ENCODE measurements at regions of chr16 and their contacts with region 1.

Region 1: GRCh38 chr16:80824718-80825364 is 20.4 kb upstream of the CDYL2 start:
- DNase-seq: peak in 6 of 9 donors; percentile 16 to 51 (median 37)
- ATAC-seq: peak; percentile 69
- H3K4me3 ChIP-seq: no peak overlapping the region
- H3K4me3 Mint-ChIP-seq: no peak overlapping the region
- H3K27ac ChIP-seq: no peak overlapping the region
- H3K27ac Mint-ChIP-seq: no peak overlapping the region
- H3K4me1 ChIP-seq: no peaks in the 10 kb centered on the region
- H3K4me1 Mint-ChIP-seq: peaks cover 0 to 3% (median 0%) of the 10 kb centered on the region in 7 donors
- H3K27me3 ChIP-seq: no peaks in the 10 kb centered on the region
- H3K27me3 Mint-ChIP-seq: peaks cover 2 to 33% (median 5%) of the 10 kb centered on the region in 5 donors

Region 2: GRCh38 chr16:80273635-80274538 is 551.0 kb before region 1 on chr16:
- CTCF ChIA-PET with region 1: no interaction called
- POLR2A ChIA-PET with region 1: no interaction called
- intact Hi-C with region 1: loop called in 1 of 2 experiments (anchors 10 kb)
- DNase-seq: no peak
- ATAC-seq: no peak
- H3K4me3 ChIP-seq: no peak overlapping the region
- H3K4me3 Mint-ChIP-seq: no peak overlapping the region
- H3K27ac ChIP-seq: no peak overlapping the region
- H3K27ac Mint-ChIP-seq: no peak overlapping the region
- H3K4me1 ChIP-seq: no peaks in the 10 kb centered on the region
- H3K4me1 Mint-ChIP-seq: peaks cover 0 to under 1% (median 0%) of the 10 kb centered on the region in 7 donors
- H3K27me3 ChIP-seq: no peaks in the 10 kb centered on the region
- H3K27me3 Mint-ChIP-seq: peaks cover 0 to 25% (median 5%) of the 10 kb centered on the region in 5 donors

Region 3: GRCh38 chr16:80526425-80527061 is 298.3 kb before region 1 on chr16:
- CTCF ChIA-PET with region 1: interaction called, 9 read pairs
- POLR2A ChIA-PET with region 1: no interaction called
- intact Hi-C with region 1: loop called (anchors 1 kb)
- DNase-seq: peak; percentile 18 to 62 (median 51)
- ATAC-seq: peak; percentile 89
- H3K4me3 ChIP-seq: no peak overlapping the region
- H3K4me3 Mint-ChIP-seq: no peak overlapping the region
- H3K27ac ChIP-seq: no peak overlapping the region
- H3K27ac Mint-ChIP-seq: peak overlapping the region in 1 of 9 donors; percentile 4
- H3K4me1 ChIP-seq: no peaks in the 10 kb centered on the region
- H3K4me1 Mint-ChIP-seq: peaks cover 0 to 20% (median 0%) of the 10 kb centered on the region in 7 donors
- H3K27me3 ChIP-seq: no peaks in the 10 kb centered on the region
- H3K27me3 Mint-ChIP-seq: peaks cover 0 to 26% (median 0%) of the 10 kb centered on the region in 5 donors

Region 4: DNA sequence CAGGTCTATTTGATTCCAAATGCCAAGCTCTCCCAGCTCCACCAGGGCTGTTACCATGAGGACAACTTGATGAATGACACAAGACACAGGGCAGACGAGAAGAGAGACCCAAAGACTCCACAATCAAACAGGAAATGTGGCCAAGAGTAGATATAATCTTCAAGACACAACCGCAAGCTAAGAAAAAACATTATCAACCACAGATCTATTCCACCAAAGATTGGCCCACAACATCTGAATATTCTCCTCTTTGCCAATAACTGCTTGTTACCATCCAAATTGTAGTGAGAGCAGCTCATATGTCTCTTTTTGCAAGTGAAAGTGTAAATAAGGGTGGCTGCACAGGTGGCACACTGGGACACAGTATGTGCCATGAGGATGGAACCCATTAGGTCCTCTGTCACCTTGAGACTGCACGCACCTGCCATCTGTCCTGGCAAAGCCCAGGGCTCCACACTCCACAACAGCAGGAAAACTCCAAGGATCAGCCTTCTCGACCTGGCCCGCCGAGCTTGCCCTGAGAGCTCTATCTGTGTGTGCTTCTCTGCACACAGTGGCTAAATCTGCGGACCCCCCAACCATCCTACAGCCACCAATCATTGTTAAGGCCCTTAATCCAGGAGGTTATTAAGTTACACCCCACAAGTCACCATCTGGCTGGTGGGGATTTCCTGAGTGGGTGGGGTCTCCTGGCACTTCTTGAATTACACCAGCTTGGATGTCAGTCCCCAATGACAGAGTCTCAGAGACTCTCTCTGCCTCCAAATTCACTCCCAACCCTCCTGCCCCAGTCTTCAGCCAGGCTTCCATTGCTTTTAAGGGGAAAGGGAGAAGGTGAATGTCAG is 233.5 kb before region 1 on chr16:
- CTCF ChIA-PET with region 1: no interaction called
- POLR2A ChIA-PET with region 1: no interaction called
- intact Hi-C with region 1: loop called in 1 of 2 experiments (anchors 5 kb)
- DNase-seq: peak in 8 of 9 donors; percentile 35 to 83 (median 68)
- ATAC-seq: peak; percentile 92
- H3K4me3 ChIP-seq: peak overlapping the region; percentile 42
- H3K4me3 Mint-ChIP-seq: peak overlapping the region; percentile 45 to 79 (median 64)
- H3K27ac ChIP-seq: no peak overlapping the region
- H3K27ac Mint-ChIP-seq: peak overlapping the region in 8 of 9 donors; percentile 1 to 82 (median 38)
- H3K4me1 ChIP-seq: peaks cover 10 to 19% of the 10 kb centered on the region in 2 donors
- H3K4me1 Mint-ChIP-seq: peaks cover 17 to 50% (median 29%) of the 10 kb centered on the region in 7 donors
- H3K27me3 ChIP-seq: no peaks in the 10 kb centered on the region
- H3K27me3 Mint-ChIP-seq: peaks cover 0 to 35% (median 5%) of the 10 kb centered on the region in 5 donors

Region 5: DNA sequence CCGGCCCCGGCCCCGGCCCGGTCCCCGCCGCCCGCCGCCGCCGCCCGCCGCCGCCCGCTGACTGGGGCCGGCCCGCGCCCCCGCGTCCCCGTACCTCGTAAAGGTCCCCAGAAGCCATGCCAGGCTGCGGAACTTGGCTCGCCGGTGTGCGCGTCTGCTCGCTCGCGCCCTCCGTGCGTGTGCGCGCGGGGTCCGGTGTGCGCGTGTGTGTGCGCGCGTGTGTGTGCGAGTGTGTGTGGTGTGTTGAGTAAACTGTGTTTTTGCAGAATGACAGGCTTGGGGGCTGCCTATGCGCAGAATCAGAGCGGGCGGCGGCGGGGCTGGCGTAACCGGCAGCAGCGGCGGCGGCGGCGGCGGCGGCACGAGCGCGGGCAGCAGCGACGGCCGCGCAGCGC is 20.8 kb before region 1 on chr16:
- CTCF ChIA-PET with region 1: no interaction called
- POLR2A ChIA-PET with region 1: no interaction called
- intact Hi-C with region 1: loop called in 1 of 2 experiments (anchors 2 kb)
- DNase-seq: peak; percentile 26 to 69 (median 52)
- ATAC-seq: peak; percentile 69
- H3K4me3 ChIP-seq: no peak overlapping the region
- H3K4me3 Mint-ChIP-seq: peak overlapping the region; percentile 85 to 96 (median 94)
- H3K27ac ChIP-seq: no peak overlapping the region
- H3K27ac Mint-ChIP-seq: peak overlapping the region in 7 of 9 donors; percentile 46 to 98 (median 78)
- H3K4me1 ChIP-seq: peaks cover 0 to 10% of the 10 kb centered on the region in 2 donors
- H3K4me1 Mint-ChIP-seq: peaks cover 12 to 59% (median 18%) of the 10 kb centered on the region in 7 donors
- H3K27me3 ChIP-seq: no peaks in the 10 kb centered on the region
- H3K27me3 Mint-ChIP-seq: peaks cover 0 to 9% (median 0%) of the 10 kb centered on the region in 5 donors

Measured in naive thymus-derived CD4-positive, alpha-beta T cell (primary cell).